ENCODE measurements at regions of chr1 and their contacts with region 1.

Region 1: DNA sequence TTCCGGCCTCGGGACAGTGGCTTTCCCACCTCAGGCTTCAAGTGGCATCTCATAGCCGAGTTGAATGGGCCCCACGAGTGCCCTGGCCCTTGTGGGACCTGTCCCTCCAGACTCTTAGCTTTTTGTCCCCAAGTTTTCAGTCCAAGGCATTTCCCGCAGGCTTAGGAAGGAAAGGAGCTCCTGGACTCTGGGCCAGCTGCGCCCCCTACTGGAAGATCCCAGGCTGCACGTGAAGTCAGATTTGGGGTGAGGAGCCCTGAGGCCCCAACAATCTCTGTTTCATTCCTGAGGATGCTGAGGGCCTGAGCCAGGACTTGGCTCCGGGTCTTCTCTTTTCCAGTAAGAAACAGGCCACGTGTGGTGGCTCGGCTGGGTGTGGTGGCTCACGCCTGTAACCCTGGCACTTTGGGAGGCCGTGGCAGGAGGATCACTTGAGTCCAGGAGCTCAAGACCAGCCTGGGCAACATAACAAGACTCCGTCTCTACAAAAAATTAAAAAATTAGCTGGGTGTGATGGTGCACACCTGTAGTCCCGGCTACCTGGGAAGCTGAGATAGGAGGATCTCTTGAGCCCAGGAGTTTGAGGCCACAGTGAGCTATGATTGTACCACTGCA is 67.4 kb downstream of the ARHGEF10L start:
- DNase-seq: peak; percentile 42
- H3K4me3 ChIP-seq: no peak overlapping the region
- H3K27ac ChIP-seq: no peak overlapping the region
- H3K4me1 ChIP-seq: no peaks in the 10 kb centered on the region
- H3K27me3 ChIP-seq: peaks cover 2% of the 10 kb centered on the region
- CTCF ChIP-seq: peak; percentile 90 to 98

Region 2: GRCh38 chr1:17287130-17287776 is 319.7 kb before region 1 on chr1:
- CTCF ChIA-PET with region 1: no interaction called
- dilution Hi-C with region 1: no loop called
- in situ Hi-C with region 1: no loop called
- intact Hi-C with region 1: no loop called
- DNase-seq: peak; percentile 96
- H3K4me3 ChIP-seq: no peak overlapping the region
- H3K27ac ChIP-seq: no peak overlapping the region
- H3K4me1 ChIP-seq: peaks cover 47% of the 10 kb centered on the region
- H3K27me3 ChIP-seq: no peaks in the 10 kb centered on the region
- CTCF ChIP-seq: no peak

Region 3: DNA sequence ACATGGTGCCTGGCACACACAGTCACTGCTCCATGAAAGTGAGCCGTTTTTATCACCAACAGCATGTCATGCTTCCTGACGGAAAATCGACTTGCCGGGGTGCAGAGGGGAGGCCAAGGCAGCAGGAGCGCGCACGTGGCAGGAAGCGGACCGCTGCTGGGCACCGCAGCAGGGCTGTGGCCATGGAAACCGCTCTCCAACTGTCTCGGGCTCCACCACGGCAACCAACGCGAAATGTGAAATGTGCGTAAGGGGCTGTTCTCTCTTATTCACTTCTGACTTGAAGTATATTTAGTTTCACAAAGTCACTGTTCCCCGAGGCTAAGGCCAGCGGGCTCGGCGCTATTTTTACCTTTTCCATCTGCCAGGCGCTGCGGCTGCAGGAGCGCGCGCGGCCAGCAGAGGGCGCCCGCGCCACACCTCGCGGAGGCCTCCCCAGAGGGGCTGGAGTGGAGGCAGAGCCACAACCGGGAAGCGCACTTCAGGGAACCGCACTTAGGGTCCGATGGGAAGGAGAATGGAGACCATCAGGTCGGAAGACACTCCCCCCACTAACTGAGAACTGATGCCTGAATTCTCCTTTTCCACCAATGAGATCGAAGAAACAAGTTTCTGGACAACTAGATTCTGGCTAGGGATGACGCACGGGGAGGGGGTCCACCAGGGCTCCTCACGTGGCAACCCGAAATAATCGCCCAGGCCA is 187.2 kb before region 1 on chr1:
- CTCF ChIA-PET with region 1: interaction called, 6 read pairs
- dilution Hi-C with region 1: loop called (anchors 10 kb)
- in situ Hi-C with region 1: loop called (anchors 10 kb)
- intact Hi-C with region 1: loop called (anchors 2 kb)
- DNase-seq: peak; percentile 30
- H3K4me3 ChIP-seq: no peak overlapping the region
- H3K27ac ChIP-seq: no peak overlapping the region
- H3K4me1 ChIP-seq: no peaks in the 10 kb centered on the region
- H3K27me3 ChIP-seq: no peaks in the 10 kb centered on the region
- CTCF ChIP-seq: peak; percentile 83 to 99

Region 4: DNA sequence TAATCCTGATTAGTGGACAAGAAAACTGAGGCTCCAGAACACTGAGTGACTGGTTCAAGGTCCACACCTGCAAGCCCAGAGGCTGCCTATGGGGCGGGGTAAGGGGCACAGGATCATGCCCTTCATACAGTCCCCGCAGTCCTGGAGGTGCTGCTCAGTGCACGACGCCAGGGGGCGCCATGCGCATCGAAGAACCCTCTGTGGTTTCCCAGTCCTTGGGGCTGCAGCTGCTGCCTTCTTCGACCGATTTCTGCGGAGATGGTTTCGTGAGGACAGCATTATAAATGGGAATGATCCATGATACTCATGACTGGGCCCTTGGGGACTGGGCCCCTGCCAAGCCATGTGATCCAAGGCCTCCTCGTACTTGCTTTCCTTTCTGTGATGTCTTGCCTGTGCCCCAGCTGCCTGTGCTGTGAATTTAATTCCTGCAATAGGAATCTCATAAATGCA is 104.6 kb before region 1 on chr1:
- CTCF ChIA-PET with region 1: interaction called, 13 read pairs
- dilution Hi-C with region 1: loop called (anchors 5 kb)
- in situ Hi-C with region 1: loop called (anchors 5 kb)
- intact Hi-C with region 1: loop called (anchors 1 kb)
- DNase-seq: peak; percentile 52
- H3K4me3 ChIP-seq: no peak overlapping the region
- H3K27ac ChIP-seq: no peak overlapping the region
- H3K4me1 ChIP-seq: no peaks in the 10 kb centered on the region
- H3K27me3 ChIP-seq: no peaks in the 10 kb centered on the region
- CTCF ChIP-seq: peak; percentile 90 to 96

Region 5: GRCh38 chr1:17540255-17541001 is 66.5 kb before region 1 on chr1:
- CTCF ChIA-PET with region 1: no interaction called
- dilution Hi-C with region 1: loop called (anchors 5 kb)
- in situ Hi-C with region 1: no loop called
- intact Hi-C with region 1: no loop called
- DNase-seq: no peak
- H3K4me3 ChIP-seq: peak overlapping the region; percentile 49 to 56 (median 51)
- H3K27ac ChIP-seq: no peak overlapping the region
- H3K4me1 ChIP-seq: peaks cover 3% of the 10 kb centered on the region
- H3K27me3 ChIP-seq: peaks cover 9% of the 10 kb centered on the region
- CTCF ChIP-seq: no peak

Region 6: GRCh38 chr1:17687145-17687544 is 80.2 kb after region 1 on chr1:
- CTCF ChIA-PET with region 1: no interaction called
- dilution Hi-C with region 1: loop called (anchors 5 kb)
- in situ Hi-C with region 1: no loop called
- intact Hi-C with region 1: no loop called
- DNase-seq: no peak
- H3K4me3 ChIP-seq: no peak overlapping the region
- H3K27ac ChIP-seq: no peak overlapping the region
- H3K4me1 ChIP-seq: no peaks in the 10 kb centered on the region
- H3K27me3 ChIP-seq: no peaks in the 10 kb centered on the region
- CTCF ChIP-seq: no peak